ENCODE measurements at regions of chr13 and their contacts with region 1.

Region 1: DNA sequence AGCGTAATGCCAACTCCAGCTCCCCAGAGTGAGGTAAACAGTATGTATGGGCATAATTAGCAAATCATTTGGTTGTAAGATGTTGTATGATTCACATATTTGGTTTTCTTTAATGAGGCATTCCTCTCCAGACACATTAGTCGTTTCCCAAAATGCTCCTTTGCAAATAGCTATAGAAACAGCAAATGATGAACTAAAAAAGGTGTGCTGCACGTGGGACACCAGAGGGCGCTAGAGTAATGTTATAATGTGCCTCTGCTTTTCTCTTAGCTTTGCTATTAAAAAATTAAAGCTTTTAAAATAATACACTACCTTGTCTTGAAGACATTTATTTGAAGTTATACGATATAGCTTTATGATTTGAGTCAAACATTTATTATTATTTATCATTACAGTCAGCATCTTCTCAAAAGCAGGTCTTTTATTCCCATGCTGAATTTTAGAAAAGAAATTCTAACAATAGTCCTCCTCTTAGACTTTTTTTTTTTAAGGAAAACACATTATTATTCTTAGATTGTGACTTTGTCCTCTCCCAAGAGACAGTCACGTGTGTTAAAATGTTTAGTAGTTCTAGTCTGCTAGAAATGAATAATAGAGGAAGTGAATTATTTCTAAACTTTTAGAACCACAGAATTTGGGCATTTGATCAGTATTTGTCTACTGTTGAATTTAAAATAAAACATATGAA is 121.6 kb upstream of the FRY start:
- DNase-seq: peak; percentile 9 to 59 (median 45)
- ATAC-seq: peak; percentile 76
- H3K4me3 ChIP-seq: no peak overlapping the region
- H3K4me3 Mint-ChIP-seq: no peak overlapping the region
- H3K27ac ChIP-seq: no peak overlapping the region
- H3K27ac Mint-ChIP-seq: no peak overlapping the region
- H3K4me1 ChIP-seq: no peaks in the 10 kb centered on the region
- H3K4me1 Mint-ChIP-seq: peaks cover 0 to 24% (median 0%) of the 10 kb centered on the region in 7 donors
- H3K27me3 ChIP-seq: no peaks in the 10 kb centered on the region
- H3K27me3 Mint-ChIP-seq: peaks cover 0 to 52% (median 9%) of the 10 kb centered on the region in 5 donors

Region 2: GRCh38 chr13:31885994-31886393 is 24.0 kb before region 1 on chr13:
- CTCF ChIA-PET with region 1: no interaction called
- POLR2A ChIA-PET with region 1: no interaction called
- intact Hi-C with region 1: no loop called
- DNase-seq: no peak
- ATAC-seq: no peak
- H3K4me3 ChIP-seq: no peak overlapping the region
- H3K4me3 Mint-ChIP-seq: no peak overlapping the region
- H3K27ac ChIP-seq: no peak overlapping the region
- H3K27ac Mint-ChIP-seq: no peak overlapping the region
- H3K4me1 ChIP-seq: no peaks in the 10 kb centered on the region
- H3K4me1 Mint-ChIP-seq: peaks cover 0 to 1% (median 0%) of the 10 kb centered on the region in 7 donors
- H3K27me3 ChIP-seq: no peaks in the 10 kb centered on the region
- H3K27me3 Mint-ChIP-seq: peaks cover 0 to 26% (median 0%) of the 10 kb centered on the region in 5 donors

Region 3: DNA sequence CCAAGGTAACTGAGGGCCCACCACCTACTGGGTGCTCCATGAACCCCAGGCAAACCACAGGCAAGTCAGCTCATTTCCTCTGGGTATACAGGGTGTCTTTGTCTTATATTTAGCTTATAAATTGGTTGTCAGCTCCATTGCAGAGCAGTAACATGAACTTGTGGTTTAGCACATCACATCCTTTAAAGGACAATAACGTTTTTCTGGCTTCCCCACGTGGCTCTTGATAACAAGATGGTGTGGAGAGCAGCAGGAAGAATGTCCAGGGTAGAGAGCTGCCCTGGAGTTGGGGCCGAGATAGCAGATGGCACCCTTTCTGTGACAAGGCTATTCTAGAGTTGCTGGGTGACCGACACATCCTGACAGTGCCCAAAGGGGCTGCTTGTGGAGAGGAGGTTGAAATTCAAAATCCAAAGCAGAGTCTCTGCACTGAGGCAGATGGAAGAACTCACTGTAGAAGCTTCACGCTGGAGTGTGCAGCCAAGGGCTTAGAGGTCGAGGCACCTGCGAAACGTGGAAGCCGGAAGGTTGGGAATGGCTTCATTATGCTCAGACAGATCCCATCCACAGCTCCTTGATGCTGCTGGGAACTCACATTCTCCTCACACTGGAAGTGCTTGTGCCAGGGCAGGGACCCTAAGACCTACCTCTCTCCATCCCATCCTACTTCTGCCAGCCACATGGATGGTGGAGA is 11.5 kb before region 1 on chr13:
- CTCF ChIA-PET with region 1: interaction called, 11 read pairs
- POLR2A ChIA-PET with region 1: no interaction called
- intact Hi-C with region 1: no loop called
- DNase-seq: no peak
- ATAC-seq: peak; percentile 32
- H3K4me3 ChIP-seq: no peak overlapping the region
- H3K4me3 Mint-ChIP-seq: peak overlapping the region in 1 of 10 donors; percentile 36
- H3K27ac ChIP-seq: no peak overlapping the region
- H3K27ac Mint-ChIP-seq: no peak overlapping the region
- H3K4me1 ChIP-seq: no peaks in the 10 kb centered on the region
- H3K4me1 Mint-ChIP-seq: peaks cover 0 to 35% (median 0%) of the 10 kb centered on the region in 7 donors
- H3K27me3 ChIP-seq: no peaks in the 10 kb centered on the region
- H3K27me3 Mint-ChIP-seq: peaks cover 0 to 41% (median 6%) of the 10 kb centered on the region in 5 donors

Region 4: DNA sequence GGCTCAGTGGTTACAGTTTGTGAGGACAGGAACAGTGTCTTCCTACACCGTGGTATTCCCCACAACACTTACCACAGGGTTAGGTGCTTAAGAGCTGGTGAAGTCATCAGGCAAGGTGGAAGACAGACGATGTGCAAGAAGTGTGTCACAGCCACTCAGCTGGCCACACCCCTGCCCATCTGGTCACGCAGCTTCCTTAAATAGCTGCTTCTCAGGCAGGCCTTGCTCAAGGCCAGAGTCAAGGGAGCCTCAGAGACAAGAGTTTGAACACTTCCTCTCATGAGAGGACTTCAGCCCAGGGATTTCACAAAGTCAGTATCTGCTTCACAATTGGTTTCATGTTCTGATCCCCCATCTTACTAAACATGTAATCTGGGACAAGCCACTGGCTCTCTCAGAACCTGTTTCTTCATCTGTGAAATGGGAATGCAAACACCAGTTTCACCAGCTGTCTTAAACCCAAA is 41.2 kb after region 1 on chr13:
- CTCF ChIA-PET with region 1: no interaction called
- POLR2A ChIA-PET with region 1: no interaction called
- intact Hi-C with region 1: no loop called
- DNase-seq: peak in 1 of 9 donors; percentile 25
- ATAC-seq: peak; percentile 91
- H3K4me3 ChIP-seq: no peak overlapping the region
- H3K4me3 Mint-ChIP-seq: peak overlapping the region in 1 of 10 donors; percentile 56
- H3K27ac ChIP-seq: no peak overlapping the region
- H3K27ac Mint-ChIP-seq: peak overlapping the region in 1 of 9 donors; percentile 79
- H3K4me1 ChIP-seq: no peaks in the 10 kb centered on the region
- H3K4me1 Mint-ChIP-seq: peaks cover 0 to 15% (median 0%) of the 10 kb centered on the region in 7 donors
- H3K27me3 ChIP-seq: no peaks in the 10 kb centered on the region
- H3K27me3 Mint-ChIP-seq: peaks cover 0 to 6% (median 0%) of the 10 kb centered on the region in 5 donors

Region 5: GRCh38 chr13:31965361-31966066 is 55.5 kb after region 1 on chr13:
- CTCF ChIA-PET with region 1: no interaction called
- POLR2A ChIA-PET with region 1: no interaction called
- intact Hi-C with region 1: loop called in 1 of 2 experiments (anchors 5 kb)
- DNase-seq: no peak
- ATAC-seq: no peak
- H3K4me3 ChIP-seq: no peak overlapping the region
- H3K4me3 Mint-ChIP-seq: no peak overlapping the region
- H3K27ac ChIP-seq: no peak overlapping the region
- H3K27ac Mint-ChIP-seq: no peak overlapping the region
- H3K4me1 ChIP-seq: no peaks in the 10 kb centered on the region
- H3K4me1 Mint-ChIP-seq: peaks cover 0 to 7% (median 0%) of the 10 kb centered on the region in 7 donors
- H3K27me3 ChIP-seq: no peaks in the 10 kb centered on the region
- H3K27me3 Mint-ChIP-seq: peaks cover 5 to 44% (median 18%) of the 10 kb centered on the region in 5 donors

Region 6: GRCh38 chr13:31996592-31996991 is 86.6 kb after region 1 on chr13:
- CTCF ChIA-PET with region 1: no interaction called
- POLR2A ChIA-PET with region 1: no interaction called
- intact Hi-C with region 1: no loop called
- DNase-seq: no peak
- ATAC-seq: no peak
- H3K4me3 ChIP-seq: no peak overlapping the region
- H3K4me3 Mint-ChIP-seq: no peak overlapping the region
- H3K27ac ChIP-seq: no peak overlapping the region
- H3K27ac Mint-ChIP-seq: no peak overlapping the region
- H3K4me1 ChIP-seq: no peaks in the 10 kb centered on the region
- H3K4me1 Mint-ChIP-seq: no peaks in the 10 kb centered on the region
- H3K27me3 ChIP-seq: no peaks in the 10 kb centered on the region
- H3K27me3 Mint-ChIP-seq: peaks cover 0 to 7% (median 0%) of the 10 kb centered on the region in 5 donors

Region 7: DNA sequence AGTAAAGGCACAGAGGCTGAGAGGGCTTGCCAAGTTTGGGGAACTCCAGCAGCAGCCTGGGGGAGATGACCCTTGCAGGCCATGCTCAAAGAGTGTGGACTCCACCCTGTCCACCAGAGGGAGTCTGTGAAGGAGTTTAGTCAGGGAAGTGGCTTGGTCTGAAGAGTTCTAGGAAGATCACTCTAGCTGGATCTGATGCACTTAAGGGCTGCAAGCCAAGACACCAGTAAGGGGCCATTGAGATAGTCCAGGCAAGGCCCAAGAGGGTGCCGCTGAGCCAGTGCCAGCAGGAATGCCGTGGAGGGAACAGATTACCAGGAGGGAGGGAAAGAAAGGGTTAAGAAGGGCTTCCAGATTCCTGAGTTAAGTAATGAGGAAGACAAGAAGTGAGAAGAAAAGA is 336.5 kb after region 1 on chr13:
- CTCF ChIA-PET with region 1: no interaction called
- POLR2A ChIA-PET with region 1: no interaction called
- intact Hi-C with region 1: loop called in 1 of 2 experiments (anchors 10 kb)
- DNase-seq: peak in 2 of 9 donors; percentile 14 to 56
- ATAC-seq: peak; percentile 75
- H3K4me3 ChIP-seq: no peak overlapping the region
- H3K4me3 Mint-ChIP-seq: no peak overlapping the region
- H3K27ac ChIP-seq: no peak overlapping the region
- H3K27ac Mint-ChIP-seq: peak overlapping the region in 1 of 9 donors; percentile 62
- H3K4me1 ChIP-seq: no peaks in the 10 kb centered on the region
- H3K4me1 Mint-ChIP-seq: peaks cover 0 to 6% (median 0%) of the 10 kb centered on the region in 7 donors
- H3K27me3 ChIP-seq: no peaks in the 10 kb centered on the region
- H3K27me3 Mint-ChIP-seq: no peaks in the 10 kb centered on the region

Region 8: DNA sequence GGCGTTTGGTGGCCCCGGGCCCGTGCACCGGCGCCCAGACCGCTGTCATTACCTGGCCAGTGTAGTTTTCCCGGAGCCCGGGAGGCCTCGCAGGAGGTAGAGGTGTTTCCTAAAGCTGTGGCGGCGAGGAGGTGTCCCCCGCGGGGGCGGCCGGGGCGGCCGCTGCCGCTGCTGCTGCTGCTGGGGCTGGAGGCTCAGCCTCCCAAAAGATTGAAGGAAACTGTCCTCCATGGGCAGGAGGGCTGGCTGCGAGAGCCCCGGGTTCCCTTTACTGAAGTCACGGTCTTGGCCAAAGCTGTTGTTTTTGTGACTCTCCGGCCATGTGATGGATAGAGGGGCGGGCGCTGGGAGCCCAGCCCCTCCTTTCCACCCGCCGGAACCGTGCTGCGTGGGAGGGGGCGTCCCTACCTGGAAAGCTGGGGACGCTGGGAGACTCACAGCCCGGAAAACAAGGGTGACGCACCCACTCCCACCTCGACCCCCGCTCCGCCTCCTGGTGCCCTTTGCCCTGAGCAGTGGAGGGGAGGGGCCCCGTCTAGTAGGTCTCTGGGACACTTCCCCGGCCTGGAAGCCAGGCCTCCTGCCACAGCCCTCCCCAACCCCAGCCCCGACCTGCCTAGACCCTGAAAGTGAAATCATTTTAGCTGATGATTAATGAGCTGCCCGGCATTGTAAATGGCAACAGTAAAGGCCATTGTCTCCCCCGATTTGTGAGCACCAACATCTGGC is 518.0 kb after region 1 on chr13 and contains the start of gene N4BP2L1:
- CTCF ChIA-PET with region 1: no interaction called
- POLR2A ChIA-PET with region 1: no interaction called
- intact Hi-C with region 1: loop called in 1 of 2 experiments (anchors 10 kb)
- DNase-seq: peak; percentile 60 to 91 (median 78)
- ATAC-seq: peak; percentile 81
- H3K4me3 ChIP-seq: peak within 1 kb of the TSS; percentile 64
- H3K4me3 Mint-ChIP-seq: peak within 1 kb of the TSS; percentile 90 to 100 (median 94)
- H3K27ac ChIP-seq: peak within 1 kb of the TSS; percentile 98
- H3K27ac Mint-ChIP-seq: peak within 1 kb of the TSS; percentile 95 to 99 (median 97)
- H3K4me1 ChIP-seq: peaks cover 19 to 20% of the 10 kb centered on the region in 2 donors
- H3K4me1 Mint-ChIP-seq: peaks cover 34 to 50% (median 48%) of the 10 kb centered on the region in 7 donors
- H3K27me3 ChIP-seq: no peaks in the 10 kb centered on the region
- H3K27me3 Mint-ChIP-seq: no peaks in the 10 kb centered on the region
- total RNA-seq, gene N4BP2L1: 30.4 to 58.0 (median 47.1) TPM

Region 9: DNA sequence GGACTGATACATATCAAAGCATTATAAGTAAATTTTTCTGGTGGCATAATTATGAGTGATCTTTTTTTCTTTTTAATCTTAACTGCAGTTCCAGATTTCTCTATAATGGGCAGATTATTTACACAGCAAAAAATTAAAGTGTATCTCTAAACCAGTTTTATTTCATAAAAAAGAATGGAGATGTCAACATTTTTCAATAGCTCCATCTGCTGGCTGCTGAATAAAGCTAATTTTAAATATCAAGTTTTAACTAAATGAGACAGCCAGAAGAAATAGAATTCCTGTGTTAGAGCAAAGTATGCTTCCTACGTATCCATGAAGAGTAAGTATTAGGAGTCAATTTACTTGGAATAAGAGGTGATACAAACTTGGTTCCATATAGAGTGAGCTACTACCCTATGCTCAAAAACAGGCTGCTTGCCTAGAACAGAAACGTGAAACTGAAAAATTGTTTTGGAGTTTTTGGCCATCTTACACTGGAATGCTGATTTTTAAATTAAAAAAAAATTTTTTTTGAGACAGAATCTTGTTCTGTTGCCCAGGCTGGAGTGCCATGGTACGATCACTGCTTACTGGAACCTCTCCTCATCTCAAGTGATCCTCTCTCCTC is 671.3 kb after region 1 on chr13:
- CTCF ChIA-PET with region 1: interaction called, 11 read pairs
- POLR2A ChIA-PET with region 1: no interaction called
- intact Hi-C with region 1: loop called in 1 of 2 experiments (anchors 1 kb)
- DNase-seq: peak in 6 of 9 donors; percentile 5 to 37 (median 22)
- ATAC-seq: no peak
- H3K4me3 ChIP-seq: no peak overlapping the region
- H3K4me3 Mint-ChIP-seq: no peak overlapping the region
- H3K27ac ChIP-seq: no peak overlapping the region
- H3K27ac Mint-ChIP-seq: no peak overlapping the region
- H3K4me1 ChIP-seq: peaks cover 4 to 5% of the 10 kb centered on the region in 2 donors
- H3K4me1 Mint-ChIP-seq: peaks cover 6 to 10% (median 9%) of the 10 kb centered on the region in 7 donors
- H3K27me3 ChIP-seq: no peaks in the 10 kb centered on the region
- H3K27me3 Mint-ChIP-seq: peaks cover 0 to 22% (median 0%) of the 10 kb centered on the region in 5 donors

Region 10: DNA sequence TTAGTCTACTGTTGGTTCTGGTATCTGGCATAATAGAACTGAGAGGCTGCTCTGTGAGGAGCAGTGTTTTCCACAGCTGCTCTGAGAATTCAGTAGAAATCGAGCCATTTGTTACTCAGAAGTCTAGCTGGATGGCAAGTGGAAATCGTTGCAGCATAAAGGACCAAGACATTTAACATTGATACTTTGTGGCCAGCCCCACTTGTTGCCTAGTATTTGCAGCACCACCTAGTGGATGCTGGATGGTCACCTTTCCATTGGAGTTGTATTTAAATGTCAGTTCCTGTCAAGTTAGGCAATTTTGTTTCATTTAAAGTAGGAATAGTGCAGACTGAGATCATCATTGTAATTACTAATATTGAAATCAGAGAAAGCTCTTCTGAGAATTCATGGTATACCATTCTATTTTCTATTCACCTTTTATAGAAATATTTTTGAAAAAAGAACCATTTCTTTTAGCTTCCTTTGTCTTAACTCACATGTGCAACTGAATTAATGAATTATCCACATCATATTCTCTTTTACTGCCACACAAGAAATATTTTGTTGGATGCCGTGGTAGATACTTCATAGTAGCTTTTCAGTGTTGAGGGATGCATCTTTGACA is 740.8 kb after region 1 on chr13:
- CTCF ChIA-PET with region 1: no interaction called
- POLR2A ChIA-PET with region 1: no interaction called
- intact Hi-C with region 1: loop called in 1 of 2 experiments (anchors 2 kb)
- DNase-seq: peak in 8 of 9 donors; percentile 16 to 55 (median 41)
- ATAC-seq: peak; percentile 91
- H3K4me3 ChIP-seq: no peak overlapping the region
- H3K4me3 Mint-ChIP-seq: no peak overlapping the region
- H3K27ac ChIP-seq: no peak overlapping the region
- H3K27ac Mint-ChIP-seq: peak overlapping the region in 1 of 9 donors; percentile 21
- H3K4me1 ChIP-seq: peaks cover 0 to 10% of the 10 kb centered on the region in 2 donors
- H3K4me1 Mint-ChIP-seq: peaks cover 23 to 55% (median 40%) of the 10 kb centered on the region in 7 donors
- H3K27me3 ChIP-seq: no peaks in the 10 kb centered on the region
- H3K27me3 Mint-ChIP-seq: no peaks in the 10 kb centered on the region

Measured in naive thymus-derived CD4-positive, alpha-beta T cell (primary cell).